IMR-90 (cell line): ENCODE measurements at regions of chr15 and their contacts with region 1.

Region 1: DNA sequence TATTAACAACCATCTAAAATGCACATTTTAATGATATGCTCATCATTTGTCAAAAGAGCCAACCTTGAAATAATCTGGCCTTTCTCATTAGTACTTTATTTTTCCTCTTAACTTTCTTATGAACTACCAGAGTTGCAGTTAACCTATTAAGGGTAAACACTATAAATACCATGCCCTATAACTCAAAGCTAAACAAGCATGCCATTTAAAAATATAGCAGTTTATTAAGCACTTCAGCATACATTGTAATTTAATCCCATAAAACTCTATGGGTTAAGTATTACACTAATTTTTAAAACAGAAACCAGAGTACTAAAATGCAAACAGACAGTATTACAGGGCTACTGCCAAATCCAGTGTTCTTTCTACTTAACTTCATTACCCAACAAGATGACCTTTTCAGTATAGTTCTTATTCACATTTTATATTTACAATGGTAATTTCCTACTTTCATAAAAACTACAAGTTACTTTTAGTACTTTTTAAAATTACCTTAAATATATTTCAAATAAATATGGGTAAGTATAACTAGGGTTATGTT is 11.8 kb downstream of the NPTN start:
- DNase-seq: no peak
- ATAC-seq: peak; percentile 31; the same call in 1 of the 2 replicates
- H3K4me3 ChIP-seq: no peak overlapping the region
- H3K27ac ChIP-seq: no peak overlapping the region
- H3K4me1 ChIP-seq: peaks cover 4% of the 10 kb centered on the region
- H3K27me3 ChIP-seq: no peaks in the 10 kb centered on the region
- CTCF ChIP-seq: no peak
- POLR2A ChIP-seq: no peak
- RAD21 ChIP-seq: no peak

Region 2: DNA sequence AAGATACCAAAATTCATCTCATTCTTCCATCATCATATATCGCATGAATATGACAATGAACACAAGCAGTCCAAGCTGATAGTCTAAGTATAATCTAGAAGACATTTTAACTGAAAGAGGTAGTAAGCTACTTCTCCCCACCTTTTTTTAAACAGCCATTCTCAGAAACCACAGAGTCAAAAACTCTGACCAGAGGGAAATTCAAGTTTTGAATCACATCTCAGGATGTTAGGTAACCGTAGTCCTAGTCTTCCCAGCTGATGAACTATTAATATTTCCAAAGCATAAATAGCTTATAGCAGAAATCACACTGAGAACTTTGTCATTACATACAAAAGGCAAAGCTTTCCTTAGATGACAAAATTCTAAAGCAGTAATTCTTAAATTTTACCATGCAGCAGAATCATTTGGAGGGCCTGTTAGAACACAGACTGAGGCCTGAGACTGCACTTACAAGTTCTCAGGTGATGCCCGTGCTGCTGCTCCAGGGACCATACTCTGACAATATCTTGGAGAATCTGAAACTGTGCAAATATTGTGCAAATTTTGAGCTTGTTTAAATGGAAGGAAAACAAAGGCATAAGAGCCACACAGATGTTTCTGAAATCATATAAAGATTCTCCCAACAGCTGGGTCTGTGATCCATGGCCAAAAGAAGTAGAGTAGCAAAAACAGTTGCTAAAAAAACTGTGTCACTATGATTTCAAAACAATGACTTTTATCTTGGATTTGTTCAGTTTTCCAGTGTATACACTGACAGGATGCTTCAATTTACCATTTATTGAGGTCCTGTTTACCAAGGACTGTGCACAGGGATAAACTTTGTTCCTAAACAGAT is 13.7 kb before region 1 on chr15:
- CTCF ChIA-PET with region 1: interaction called, 3 read pairs
- POLR2A ChIA-PET with region 1: interaction called, 3 read pairs
- dilution Hi-C with region 1: no loop called
- in situ Hi-C with region 1: no loop called
- intact Hi-C with region 1: loop called (anchors 2 kb)
- DNase-seq: no peak
- ATAC-seq: no peak
- H3K4me3 ChIP-seq: no peak overlapping the region
- H3K27ac ChIP-seq: no peak overlapping the region
- H3K4me1 ChIP-seq: peaks cover 14% of the 10 kb centered on the region
- H3K27me3 ChIP-seq: no peaks in the 10 kb centered on the region
- CTCF ChIP-seq: no peak
- POLR2A ChIP-seq: no peak
- RAD21 ChIP-seq: no peak